ENCODE measurements at regions of chr12 and their contacts with region 1.

Region 1: DNA sequence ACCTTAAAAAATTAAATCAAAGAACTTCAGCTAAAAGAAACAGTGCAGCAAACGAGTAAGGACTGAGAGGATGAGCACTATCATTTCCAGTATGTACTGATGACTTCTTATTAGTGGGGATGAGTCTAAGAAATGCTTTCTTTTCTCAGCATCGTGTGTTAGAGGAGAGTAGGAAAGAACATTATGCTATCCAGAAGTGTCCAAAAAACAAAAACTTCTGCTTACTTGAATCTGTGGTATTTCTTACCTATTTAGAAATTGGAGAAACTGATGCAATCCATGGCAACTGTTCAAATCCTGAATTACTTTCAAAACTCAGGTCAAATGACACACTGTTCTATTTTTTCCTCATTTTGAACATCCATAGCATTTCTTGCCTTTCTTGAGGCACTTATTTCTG is 23.7 kb downstream of the ABCD2 start:
- DNase-seq: no peak
- H3K4me3 Mint-ChIP-seq: no peak overlapping the region
- H3K27ac Mint-ChIP-seq: peak overlapping the region; percentile 23
- H3K4me1 Mint-ChIP-seq: no peaks in the 10 kb centered on the region
- H3K27me3 Mint-ChIP-seq: no peaks in the 10 kb centered on the region
- CTCF ChIP-seq: no peak

Region 2: GRCh38 chr12:39651477-39651876 is 55.6 kb after region 1 on chr12:
- CTCF ChIA-PET with region 1: no interaction called
- intact Hi-C with region 1: loop called (anchors 10 kb)
- DNase-seq: no peak
- H3K4me3 Mint-ChIP-seq: no peak overlapping the region
- H3K27ac Mint-ChIP-seq: no peak overlapping the region
- H3K4me1 Mint-ChIP-seq: no peaks in the 10 kb centered on the region
- H3K27me3 Mint-ChIP-seq: no peaks in the 10 kb centered on the region
- CTCF ChIP-seq: no peak

Measured in Calu3 (cell line).